HCT116 (cell line): ENCODE measurements at regions of chr1 and their contacts with region 1.

Region 1: DNA sequence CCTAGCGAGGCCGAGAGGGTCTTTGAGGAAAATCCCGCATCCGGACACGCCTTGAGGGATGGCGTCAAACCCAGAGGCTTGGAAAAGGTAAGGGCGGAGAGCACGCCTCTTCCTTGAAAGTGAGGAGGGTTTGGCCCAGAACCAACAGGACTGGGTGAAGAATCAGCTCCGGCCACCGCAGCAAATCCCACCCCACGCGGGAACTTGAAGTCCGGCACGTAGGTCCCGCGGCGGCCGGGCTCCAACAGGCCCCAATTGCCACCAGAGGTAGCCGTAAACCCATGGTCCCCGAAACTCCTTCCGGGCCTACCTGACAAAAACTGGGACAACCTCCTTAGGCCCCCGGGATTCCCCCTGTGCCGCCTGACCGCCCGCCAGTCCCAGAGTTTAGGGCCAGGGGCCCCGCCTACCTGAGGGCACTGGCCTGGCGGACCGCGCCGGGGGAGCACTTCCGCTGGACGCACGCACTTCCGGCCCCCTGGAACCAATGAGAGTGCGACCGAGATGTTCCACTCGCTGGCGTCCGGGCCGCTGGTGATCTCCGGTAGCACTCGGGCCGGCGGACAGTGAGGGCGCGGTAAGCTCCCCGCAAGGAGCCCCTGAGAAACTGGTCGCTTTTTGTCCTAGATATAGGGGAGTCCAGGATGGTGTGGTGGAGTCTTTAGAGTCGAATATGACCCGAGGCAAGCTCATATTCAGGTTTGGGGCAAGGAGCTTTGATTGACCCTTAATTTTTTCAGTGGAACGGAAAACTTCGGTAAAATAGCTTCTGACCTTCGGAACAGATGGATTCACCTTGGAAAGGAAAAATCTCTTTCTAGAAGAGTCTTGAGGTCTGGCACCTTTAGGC is at the starts of genes LZIC and NMNAT1:
- DNase-seq: peak; percentile 88
- ATAC-seq: peak; percentile 93
- H3K4me3 ChIP-seq: peak within 1 kb of the TSS; percentile 84 to 90
- H3K27ac ChIP-seq: peak within 1 kb of the TSS; percentile 83
- H3K4me1 ChIP-seq: peaks cover 4 to 6% of the 10 kb centered on the region in 2 experiments; a peak in 2 of 4 replicates
- H3K27me3 ChIP-seq: no peaks in the 10 kb centered on the region
- CTCF ChIP-seq: no peak
- POLR2A ChIP-seq: peak; percentile 88
- RAD21 ChIP-seq: no peak; the same call in 1 of the 2 replicates
- total RNA-seq, gene LZIC: 26.6 TPM
- total RNA-seq, gene NMNAT1: 8.6 TPM

Region 2: GRCh38 chr1:9910425-9911178 is 32.6 kb before region 1 on chr1:
- CTCF ChIA-PET with region 1: interaction called, 3 read pairs
- POLR2A ChIA-PET with region 1: no interaction called
- RAD21 ChIA-PET with region 1: no interaction called
- intact Hi-C with region 1: loop called (anchors 2 kb)
- DNase-seq: peak; percentile 97
- ATAC-seq: peak; percentile 96
- H3K4me3 ChIP-seq: peak overlapping the region; percentile 45 to 63
- H3K27ac ChIP-seq: peak overlapping the region; percentile 90
- H3K4me1 ChIP-seq: peaks cover 10 to 23% of the 10 kb centered on the region in 2 experiments
- H3K27me3 ChIP-seq: no peaks in the 10 kb centered on the region
- CTCF ChIP-seq: no peak
- POLR2A ChIP-seq: peak; percentile 29
- RAD21 ChIP-seq: no peak

Region 3: GRCh38 chr1:10032590-10033358 is 89.6 kb after region 1 on chr1 and contains the start of gene UBE4B:
- CTCF ChIA-PET with region 1: interaction called, 3 read pairs
- POLR2A ChIA-PET with region 1: interaction called, 5 read pairs
- RAD21 ChIA-PET with region 1: no interaction called
- intact Hi-C with region 1: loop called (anchors 1 kb)
- DNase-seq: peak; percentile 93
- ATAC-seq: peak; percentile 93
- H3K4me3 ChIP-seq: peak within 1 kb of the TSS; percentile 86 to 98
- H3K27ac ChIP-seq: peak within 1 kb of the TSS; percentile 82
- H3K4me1 ChIP-seq: peaks cover 15 to 23% of the 10 kb centered on the region in 2 experiments
- H3K27me3 ChIP-seq: no peaks in the 10 kb centered on the region
- CTCF ChIP-seq: peak; percentile 76 to 88 (median 77)
- POLR2A ChIP-seq: peak; percentile 46
- RAD21 ChIP-seq: peak; percentile 83
- total RNA-seq, gene UBE4B: 44.7 TPM